ENCODE measurements at regions of chr4 and their contacts with region 1.

Region 1: GRCh38 chr4:10554694-10555093 is 97.5 kb upstream of the ZNF518B start:
- DNase-seq: peak; percentile 78
- H3K4me3 ChIP-seq: no peak overlapping the region
- H3K27ac ChIP-seq: no peak overlapping the region
- H3K4me1 ChIP-seq: no peaks in the 10 kb centered on the region
- H3K27me3 ChIP-seq: peaks cover 4% of the 10 kb centered on the region; the same call in 1 of the 2 replicates

Region 2: DNA sequence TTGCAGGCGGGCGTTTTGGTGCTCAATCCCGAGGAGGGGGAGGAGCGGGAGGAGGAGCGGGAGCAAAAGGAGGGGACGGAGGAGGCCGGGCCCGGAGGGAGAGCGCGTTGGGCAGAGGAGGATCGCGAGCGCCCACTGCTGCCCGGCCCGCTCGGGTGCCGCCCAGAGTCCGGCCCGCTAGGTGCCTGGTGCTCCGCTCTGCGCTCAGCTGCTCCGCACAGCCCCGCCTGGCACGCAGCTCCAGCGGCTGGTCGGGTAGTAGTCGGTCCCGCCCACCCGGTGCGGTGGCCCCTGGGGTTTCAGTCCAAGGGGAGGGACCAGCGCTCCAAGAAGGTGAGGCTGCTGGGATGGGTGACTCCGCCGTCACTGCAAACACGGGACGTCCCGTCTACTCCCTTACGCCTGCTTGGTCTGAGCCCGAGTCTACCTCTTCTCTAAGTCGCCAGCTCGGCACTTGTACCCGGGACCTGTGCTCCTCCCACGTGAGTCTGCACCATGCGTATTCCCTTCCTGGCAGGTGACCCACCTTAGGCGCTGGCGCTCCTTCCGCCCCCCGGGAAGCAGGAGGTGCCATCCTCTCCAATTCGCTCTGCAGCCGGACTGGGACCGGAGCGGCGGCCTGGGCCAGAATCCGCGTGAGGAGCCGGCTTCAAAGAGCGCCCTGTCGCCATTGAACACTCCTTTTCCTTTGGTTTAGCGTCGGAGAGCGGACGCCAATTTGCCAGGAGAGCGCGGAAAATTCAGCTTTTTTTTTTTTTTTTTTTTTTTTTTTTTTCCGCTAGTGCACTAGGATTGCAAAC is 874.4 kb after region 1 on chr4:
- in situ Hi-C with region 1: loop called (anchors 25 kb)
- DNase-seq: peak; percentile 27
- H3K4me3 ChIP-seq: no peak overlapping the region
- H3K27ac ChIP-seq: no peak overlapping the region
- H3K4me1 ChIP-seq: no peaks in the 10 kb centered on the region
- H3K27me3 ChIP-seq: peaks cover 8% of the 10 kb centered on the region; the same call in 1 of the 2 replicates

Measured in GM23248 (cell line).